Left lung (tissue), 14 donors: ENCODE measurements at regions of chr10 and their contacts with region 1.

Region 1: DNA sequence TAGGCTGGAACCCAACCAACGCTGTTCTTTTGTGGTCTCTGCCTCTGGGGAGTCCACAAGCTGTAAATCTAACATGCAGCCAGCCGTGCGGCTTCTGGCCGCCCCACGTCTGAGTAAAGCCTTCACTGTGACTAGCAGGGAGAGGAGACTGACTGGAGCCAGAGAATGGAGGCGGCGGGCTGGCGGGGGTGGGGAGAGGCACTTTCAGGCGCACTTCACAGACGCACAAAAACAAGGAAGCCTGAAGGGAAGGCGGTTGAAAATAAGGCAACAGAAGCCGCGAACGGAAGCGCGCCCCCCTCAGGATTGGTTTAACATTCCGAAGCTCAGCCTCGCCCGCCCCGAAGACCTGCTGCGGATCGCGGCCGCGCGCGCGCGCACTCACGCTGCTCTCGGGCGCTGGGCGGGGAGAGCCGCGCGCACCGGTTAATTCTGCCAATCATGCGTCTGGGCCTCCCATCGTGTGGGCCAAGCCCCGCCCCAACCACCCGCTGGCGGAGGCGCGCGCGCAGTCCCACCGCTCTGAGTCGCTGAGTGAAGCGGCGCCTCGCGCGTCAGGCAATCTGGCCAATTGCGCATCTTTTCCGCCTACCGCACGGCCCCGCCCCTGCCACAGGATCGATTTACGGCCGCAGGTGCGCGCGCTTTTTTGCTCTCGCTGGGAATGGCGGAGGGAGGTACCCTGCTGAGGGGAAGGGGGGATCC is at the start of gene SFR1:
- DNase-seq: peak; percentile 99 to 100 (median 99)
- ATAC-seq: peak; percentile 91
- H3K4me3 ChIP-seq: peak within 1 kb of the TSS; percentile 61 to 68
- H3K27ac ChIP-seq: peak within 1 kb of the TSS; percentile 98 to 100
- H3K4me1 ChIP-seq: peaks cover 4 to 23% of the 10 kb centered on the region in 2 donors
- H3K27me3 ChIP-seq: no peaks in the 10 kb centered on the region
- CTCF ChIP-seq: peak in 1 of 2 donors; percentile 66
- polyA plus RNA-seq, gene SFR1: 9.2 to 11.3 (median 10.7) TPM

Region 2: DNA sequence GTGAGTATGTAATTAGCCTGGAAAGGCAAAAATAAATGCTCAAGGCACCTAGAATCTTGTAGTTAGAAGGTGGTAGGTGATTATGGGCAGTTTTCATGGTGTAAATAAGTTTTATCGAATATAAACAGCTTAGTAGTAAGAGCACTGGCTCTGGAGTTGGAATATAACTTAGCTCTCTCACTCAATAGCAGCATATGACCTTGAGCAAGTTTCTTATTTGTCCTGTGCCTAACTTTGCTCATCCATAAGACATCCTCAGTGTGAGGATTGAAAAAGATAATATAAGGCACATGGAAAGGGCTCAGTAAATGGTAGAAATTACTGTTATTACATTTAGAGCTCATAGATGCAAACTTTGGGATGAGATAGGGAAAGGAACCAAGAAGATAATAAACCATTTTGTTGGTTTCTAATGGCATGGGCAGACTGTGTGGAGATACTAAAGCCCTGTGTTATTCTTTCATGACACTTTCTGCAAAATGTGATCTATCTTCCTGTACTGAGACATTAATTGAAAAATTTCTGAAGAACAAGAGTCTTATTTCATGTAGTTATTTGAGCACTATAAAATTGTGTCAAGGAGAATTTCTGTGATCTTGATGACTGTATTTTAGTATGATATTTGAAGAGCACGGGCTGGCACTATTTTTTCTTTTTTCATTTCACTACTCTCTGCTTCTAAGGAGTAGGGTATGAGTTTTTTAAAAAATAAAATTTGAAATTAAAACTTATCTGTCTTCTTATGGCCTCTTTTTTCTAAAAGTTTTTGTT is 151.6 kb before region 1 on chr10:
- intact Hi-C with region 1: loop called in 1 of 2 experiments (anchors 10 kb)
- DNase-seq: no peak
- ATAC-seq: peak; percentile 9
- H3K4me3 ChIP-seq: peak overlapping the region; percentile 64 to 81
- H3K27ac ChIP-seq: peak overlapping the region; percentile 96 to 98
- H3K4me1 ChIP-seq: peaks cover 3 to 40% of the 10 kb centered on the region in 2 donors
- H3K27me3 ChIP-seq: no peaks in the 10 kb centered on the region
- CTCF ChIP-seq: no peak

Region 3: GRCh38 chr10:104045151-104046089 is 76.3 kb before region 1 on chr10:
- intact Hi-C with region 1: loop called in 1 of 2 experiments (anchors 10 kb)
- DNase-seq: peak in 3 of 4 donors; percentile 28 to 60 (median 57)
- ATAC-seq: peak; percentile 94
- H3K4me3 ChIP-seq: no peak overlapping the region
- H3K27ac ChIP-seq: no peak overlapping the region
- H3K4me1 ChIP-seq: peaks cover 9 to 11% of the 10 kb centered on the region in 2 donors
- H3K27me3 ChIP-seq: no peaks in the 10 kb centered on the region
- CTCF ChIP-seq: peak; percentile 47 to 51